ENCODE measurements at regions of chr11 and their contacts with region 1.

Region 1: GRCh38 chr11:67507864-67508485 is at the start of gene CDK2AP2:
- DNase-seq: peak; percentile 100
- H3K4me3 ChIP-seq: peak within 1 kb of the TSS; percentile 74
- H3K4me3 Mint-ChIP-seq: peak within 1 kb of the TSS; percentile 99
- H3K27ac Mint-ChIP-seq: peak within 1 kb of the TSS; percentile 100
- H3K4me1 ChIP-seq: peaks cover 63% of the 10 kb centered on the region
- H3K4me1 Mint-ChIP-seq: peaks cover 52% of the 10 kb centered on the region
- H3K27me3 ChIP-seq: no peaks in the 10 kb centered on the region
- H3K27me3 Mint-ChIP-seq: no peaks in the 10 kb centered on the region
- CTCF ChIP-seq: peak in 1 of 2 experiments; percentile 6
- total RNA-seq, gene CDK2AP2: 96.1 and 99.4 TPM in 2 replicates

Region 2: DNA sequence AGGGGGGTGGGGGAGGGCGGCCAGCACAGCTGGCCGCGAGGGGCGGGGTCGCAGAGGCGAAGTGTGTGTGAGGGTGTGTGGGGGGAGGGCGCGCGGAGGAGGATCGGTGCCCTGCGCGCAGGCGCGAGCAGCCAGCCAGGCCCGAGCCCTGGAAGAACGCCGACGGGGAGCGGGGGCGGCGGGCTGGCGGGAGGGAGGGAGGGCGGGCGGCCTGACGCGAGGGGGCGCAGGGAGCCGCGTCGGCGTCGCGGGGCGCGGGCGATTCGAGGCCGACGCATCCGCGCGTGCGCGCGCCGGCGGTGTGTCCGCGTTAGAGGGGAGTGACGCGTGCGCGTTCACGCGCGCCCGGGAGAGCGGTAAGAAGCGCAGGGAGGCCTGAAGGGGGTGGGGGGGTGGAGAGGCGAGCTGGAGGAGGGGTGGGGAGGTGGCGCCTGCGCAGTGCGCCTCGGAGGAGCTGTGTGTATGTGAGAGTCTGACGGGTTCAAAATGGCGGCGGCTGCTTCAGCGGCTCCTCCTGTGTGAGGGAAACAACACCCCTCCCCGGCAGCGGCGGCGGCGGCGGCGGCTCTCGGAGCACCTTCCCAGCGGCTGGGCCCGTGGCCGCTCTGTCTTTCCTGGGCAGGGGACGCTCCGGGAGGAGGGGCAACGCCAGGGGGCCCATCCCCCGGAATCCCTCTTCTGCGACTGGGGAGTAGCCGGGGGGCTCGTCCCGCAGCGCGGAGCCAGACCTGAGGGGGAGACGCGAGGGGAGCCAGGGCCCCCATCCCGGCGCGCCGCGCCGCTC is 389.0 kb before region 1 on chr11 and contains the start of gene KDM2A:
- CTCF ChIA-PET with region 1: no interaction called
- POLR2A ChIA-PET with region 1: no interaction called
- intact Hi-C with region 1: loop called (anchors 10 kb)
- DNase-seq: peak; percentile 99 to 100
- H3K4me3 ChIP-seq: peak within 1 kb of the TSS; percentile 92
- H3K4me3 Mint-ChIP-seq: peak within 1 kb of the TSS; percentile 99
- H3K27ac Mint-ChIP-seq: peak within 1 kb of the TSS; percentile 96
- H3K4me1 ChIP-seq: peaks cover 54% of the 10 kb centered on the region
- H3K4me1 Mint-ChIP-seq: peaks cover 22% of the 10 kb centered on the region
- H3K27me3 ChIP-seq: no peaks in the 10 kb centered on the region
- H3K27me3 Mint-ChIP-seq: no peaks in the 10 kb centered on the region
- CTCF ChIP-seq: peak in 1 of 2 experiments; percentile 47
- total RNA-seq, gene KDM2A: 122 and 134 TPM in 2 replicates

Region 3: DNA sequence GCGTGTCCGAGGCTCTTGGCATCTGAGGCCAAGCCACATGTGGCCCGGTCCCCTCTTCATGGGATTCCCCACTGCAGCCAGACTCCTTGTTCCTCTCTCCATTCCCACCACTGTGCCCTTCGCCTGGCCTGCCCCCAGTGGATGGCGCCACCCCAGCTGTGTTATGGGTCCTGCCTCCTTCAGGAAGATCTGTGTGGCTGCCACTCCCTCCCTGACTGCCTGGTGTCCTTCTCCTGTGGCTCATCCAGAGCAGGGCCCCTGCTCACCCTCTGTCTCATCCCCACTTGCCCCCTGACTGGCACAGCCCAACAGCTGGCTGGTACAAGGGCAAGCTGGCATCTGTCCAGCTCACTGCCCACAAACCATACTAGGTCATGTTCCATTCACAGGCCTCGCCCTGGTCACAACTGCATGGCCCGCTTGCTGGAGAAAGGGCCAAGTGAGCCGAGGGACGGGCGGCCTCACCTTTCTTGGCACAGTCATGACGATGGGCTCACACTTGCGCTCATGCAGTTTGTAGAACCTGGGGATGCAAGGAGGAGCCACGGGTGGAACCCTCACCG is 68.6 kb before region 1 on chr11:
- CTCF ChIA-PET with region 1: no interaction called
- POLR2A ChIA-PET with region 1: no interaction called
- intact Hi-C with region 1: loop called (anchors 5 kb)
- DNase-seq: peak in 1 of 2 experiments; percentile 68
- H3K4me3 ChIP-seq: no peak overlapping the region
- H3K4me3 Mint-ChIP-seq: peak overlapping the region; percentile 2
- H3K27ac Mint-ChIP-seq: peak overlapping the region; percentile 9
- H3K4me1 ChIP-seq: peaks cover 14% of the 10 kb centered on the region
- H3K4me1 Mint-ChIP-seq: no peaks in the 10 kb centered on the region
- H3K27me3 ChIP-seq: no peaks in the 10 kb centered on the region
- H3K27me3 Mint-ChIP-seq: no peaks in the 10 kb centered on the region
- CTCF ChIP-seq: peak in 1 of 2 experiments; percentile 38

Region 4: GRCh38 chr11:67463186-67463585 is 44.8 kb before region 1 on chr11:
- CTCF ChIA-PET with region 1: no interaction called
- POLR2A ChIA-PET with region 1: no interaction called
- intact Hi-C with region 1: no loop called
- DNase-seq: peak in 1 of 2 experiments; percentile 39
- H3K4me3 ChIP-seq: no peak overlapping the region
- H3K4me3 Mint-ChIP-seq: no peak overlapping the region
- H3K27ac Mint-ChIP-seq: no peak overlapping the region
- H3K4me1 ChIP-seq: peaks cover 21% of the 10 kb centered on the region
- H3K4me1 Mint-ChIP-seq: peaks cover 16% of the 10 kb centered on the region
- H3K27me3 ChIP-seq: no peaks in the 10 kb centered on the region
- H3K27me3 Mint-ChIP-seq: no peaks in the 10 kb centered on the region
- CTCF ChIP-seq: no peak

Region 5: DNA sequence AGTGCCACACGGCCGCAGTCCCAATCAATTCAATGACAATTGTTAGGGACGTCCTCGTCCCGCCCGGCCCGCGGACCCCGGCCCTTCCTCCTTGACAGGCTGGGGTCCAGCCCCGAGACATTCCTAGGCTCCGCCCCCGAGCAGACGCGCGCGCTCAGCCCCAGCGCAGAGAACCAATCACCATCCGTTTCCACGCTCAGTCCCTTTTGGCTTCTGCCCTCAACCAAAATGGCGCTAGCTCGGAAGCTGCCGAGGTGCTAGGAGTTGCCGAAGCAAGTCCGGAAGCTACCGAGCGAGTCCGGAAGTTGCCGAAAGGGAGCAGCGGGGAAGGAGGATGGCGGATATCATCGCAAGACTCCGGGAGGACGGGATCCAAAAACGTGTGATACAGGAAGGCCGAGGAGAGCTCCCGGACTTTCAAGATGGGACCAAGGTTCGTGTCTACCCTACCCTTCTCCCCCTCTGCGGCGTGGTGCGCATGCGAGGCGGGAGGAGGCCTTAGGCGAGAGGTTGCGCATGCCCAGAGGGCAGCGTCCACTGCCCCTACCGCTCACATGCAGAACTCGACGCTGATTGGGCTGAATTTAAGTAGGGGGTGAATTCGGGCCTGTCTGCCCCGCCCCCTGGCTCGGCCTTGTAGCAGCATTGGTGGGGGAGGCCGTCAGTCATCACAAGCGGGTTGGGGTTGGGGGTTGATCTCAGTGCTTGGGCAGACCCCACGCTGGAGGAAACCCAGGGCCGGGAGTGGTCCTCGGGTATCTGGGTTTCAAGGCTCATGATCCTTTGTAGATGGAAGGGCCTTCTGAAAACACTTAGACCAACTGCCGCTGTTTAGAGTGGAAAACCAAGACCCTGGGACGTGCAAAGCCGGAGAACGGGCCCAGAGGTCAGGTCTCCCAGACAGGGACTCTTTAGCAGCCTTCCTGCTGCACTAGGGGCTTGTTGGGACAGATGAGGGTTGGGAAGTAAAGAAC is 24.9 kb before region 1 on chr11 and contains the start of gene AIP:
- CTCF ChIA-PET with region 1: no interaction called
- POLR2A ChIA-PET with region 1: no interaction called
- intact Hi-C with region 1: loop called (anchors 1 kb)
- DNase-seq: peak; percentile 100
- H3K4me3 ChIP-seq: peak within 1 kb of the TSS; percentile 48
- H3K4me3 Mint-ChIP-seq: peak within 1 kb of the TSS; percentile 99
- H3K27ac Mint-ChIP-seq: peak within 1 kb of the TSS; percentile 99
- H3K4me1 ChIP-seq: peaks cover 4% of the 10 kb centered on the region; the same call in 1 of the 2 replicates
- H3K4me1 Mint-ChIP-seq: peaks cover 24% of the 10 kb centered on the region
- H3K27me3 ChIP-seq: no peaks in the 10 kb centered on the region
- H3K27me3 Mint-ChIP-seq: no peaks in the 10 kb centered on the region
- CTCF ChIP-seq: peak; percentile 25 to 65
- total RNA-seq, gene AIP: 110 and 112 TPM in 2 replicates

Region 6: DNA sequence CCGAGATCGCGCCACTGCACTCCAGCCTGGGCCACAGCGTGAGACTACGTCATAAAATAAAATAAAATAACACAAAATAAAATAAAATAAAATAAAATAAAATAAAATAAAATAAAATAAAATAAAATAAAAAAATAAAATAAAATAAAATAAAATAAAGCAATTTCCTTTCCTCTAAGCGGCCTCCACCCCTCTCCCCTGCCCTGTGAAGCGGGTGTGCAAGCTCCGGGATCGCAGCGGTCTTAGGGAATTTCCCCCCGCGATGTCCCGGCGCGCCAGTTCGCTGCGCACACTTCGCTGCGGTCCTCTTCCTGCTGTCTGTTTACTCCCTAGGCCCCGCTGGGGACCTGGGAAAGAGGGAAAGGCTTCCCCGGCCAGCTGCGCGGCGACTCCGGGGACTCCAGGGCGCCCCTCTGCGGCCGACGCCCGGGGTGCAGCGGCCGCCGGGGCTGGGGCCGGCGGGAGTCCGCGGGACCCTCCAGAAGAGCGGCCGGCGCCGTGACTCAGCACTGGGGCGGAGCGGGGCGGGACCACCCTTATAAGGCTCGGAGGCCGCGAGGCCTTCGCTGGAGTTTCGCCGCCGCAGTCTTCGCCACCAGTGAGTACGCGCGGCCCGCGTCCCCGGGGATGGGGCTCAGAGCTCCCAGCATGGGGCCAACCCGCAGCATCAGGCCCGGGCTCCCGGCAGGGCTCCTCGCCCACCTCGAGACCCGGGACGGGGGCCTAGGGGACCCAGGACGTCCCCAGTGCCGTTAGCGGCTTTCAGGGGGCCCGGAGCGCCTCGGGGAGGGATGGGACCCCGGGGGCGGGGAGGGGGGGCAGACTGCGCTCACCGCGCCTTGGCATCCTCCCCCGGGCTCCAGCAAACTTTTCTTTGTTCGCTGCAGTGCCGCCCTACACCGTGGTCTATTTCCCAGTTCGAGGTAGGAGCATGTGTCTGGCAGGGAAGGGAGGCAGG is 75.6 kb after region 1 on chr11 and contains the start of gene GSTP1:
- CTCF ChIA-PET with region 1: no interaction called
- POLR2A ChIA-PET with region 1: no interaction called
- intact Hi-C with region 1: loop called (anchors 1 kb)
- DNase-seq: peak; percentile 93 to 98
- H3K4me3 ChIP-seq: peak within 1 kb of the TSS; percentile 87
- H3K4me3 Mint-ChIP-seq: peak within 1 kb of the TSS; percentile 75
- H3K27ac Mint-ChIP-seq: peak within 1 kb of the TSS; percentile 85
- H3K4me1 ChIP-seq: peaks cover 48% of the 10 kb centered on the region
- H3K4me1 Mint-ChIP-seq: peaks cover 61% of the 10 kb centered on the region
- H3K27me3 ChIP-seq: no peaks in the 10 kb centered on the region
- H3K27me3 Mint-ChIP-seq: no peaks in the 10 kb centered on the region
- CTCF ChIP-seq: peak; percentile 62 to 93
- total RNA-seq, gene GSTP1: 1,799 and 1,911 TPM in 2 replicates

Measured in Caco-2 (cell line).